G401 (cell line): ENCODE measurements at regions of chr4 and their contacts with region 1.

Region 1: GRCh38 chr4:109433205-109434006 is at the start of gene SEC24B:
- DNase-seq: peak; percentile 88
- total RNA-seq, gene SEC24B: 4.8 and 6.4 TPM in 2 replicates

Region 2: GRCh38 chr4:109473824-109474223 is 40.4 kb after region 1 on chr4:
- in situ Hi-C with region 1: no loop called
- DNase-seq: no peak

Region 3: GRCh38 chr4:109486007-109486406 is 52.6 kb after region 1 on chr4:
- in situ Hi-C with region 1: loop called (anchors 5 kb)
- DNase-seq: no peak

Region 4: DNA sequence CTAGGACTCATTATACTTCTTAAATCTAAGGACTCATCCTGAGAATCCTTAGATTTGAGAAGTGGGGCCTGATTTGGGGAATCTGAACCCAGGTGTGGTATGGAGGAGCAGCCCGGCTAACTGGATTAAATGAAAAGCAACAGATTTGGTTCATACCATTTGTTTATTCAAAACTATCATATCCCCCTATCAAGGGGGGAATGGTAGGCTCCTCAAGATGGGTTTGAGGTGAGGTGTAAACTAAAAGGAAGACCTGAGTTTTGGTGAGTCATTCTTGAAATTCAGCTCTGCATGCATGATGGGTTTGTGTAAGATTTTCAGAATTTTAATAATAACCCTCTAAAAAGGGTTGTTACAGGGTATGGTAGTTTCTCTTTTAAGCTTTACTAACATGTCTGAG is 216.5 kb after region 1 on chr4:
- in situ Hi-C with region 1: loop called (anchors 25 kb)
- DNase-seq: no peak

Region 5: GRCh38 chr4:109815151-109816081 is 382.0 kb after region 1 on chr4 and contains the start of gene GAR1:
- in situ Hi-C with region 1: loop called (anchors 25 kb)
- DNase-seq: peak; percentile 94
- total RNA-seq, gene GAR1: 19.0 and 23.1 TPM in 2 replicates